Gastrocnemius medialis (tissue), 4 donors: ENCODE measurements at regions of chr19 and their contacts with region 1.

Region 1: DNA sequence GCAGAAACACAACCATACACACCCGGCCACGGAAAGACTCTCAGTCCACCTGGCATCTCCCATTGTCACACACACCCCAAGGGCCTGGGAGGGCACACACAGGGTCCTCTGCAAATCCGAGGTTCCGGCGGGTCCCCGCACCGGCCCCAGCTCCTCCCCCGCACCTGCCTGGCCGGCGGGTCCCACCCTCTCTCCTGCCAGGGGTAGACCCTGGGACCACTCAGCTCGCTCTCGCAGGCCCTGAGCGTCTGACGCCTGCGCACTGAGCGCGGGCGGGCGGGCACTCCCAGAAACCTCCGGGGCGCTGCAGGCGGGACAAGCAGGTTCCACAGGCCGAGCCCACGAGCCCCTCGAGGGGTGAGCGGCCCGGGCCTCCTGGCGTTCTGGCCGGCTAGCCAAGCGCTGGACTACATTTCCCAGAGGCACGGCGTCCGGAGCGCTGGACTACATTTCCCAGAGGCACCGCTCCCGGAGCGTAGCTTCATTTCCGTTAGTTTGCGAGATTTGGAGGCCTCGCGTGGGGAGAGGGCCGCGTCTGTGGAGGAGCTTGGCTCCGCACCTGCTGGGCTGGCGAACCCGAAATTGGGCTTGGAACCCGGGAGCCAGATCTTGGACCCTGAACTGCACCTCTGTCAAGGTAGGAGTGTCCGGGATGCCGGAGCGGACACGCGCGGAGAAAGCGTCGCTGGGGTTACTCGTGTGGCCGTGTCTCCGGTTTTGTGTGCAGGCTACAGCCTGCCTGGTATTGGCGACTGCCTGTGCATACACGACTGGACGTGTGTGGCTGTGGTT is at the start of gene ZNF420:
- DNase-seq: peak; percentile 86 to 92
- ATAC-seq: peak; percentile 98 to 99
- H3K4me3 ChIP-seq: peak within 1 kb of the TSS; percentile 82 to 98 (median 93)
- H3K27ac ChIP-seq: peak within 1 kb of the TSS; percentile 84 to 92 (median 89)
- H3K4me1 ChIP-seq: peaks cover 8 to 11% of the 10 kb centered on the region in 2 donors
- H3K27me3 ChIP-seq: no peaks in the 10 kb centered on the region
- CTCF ChIP-seq: no peak
- POLR2A ChIP-seq: peak in 1 of 2 donors; percentile 47
- total RNA-seq, gene ZNF420: 3.0 to 15.4 (median 3.7) TPM

Region 2: DNA sequence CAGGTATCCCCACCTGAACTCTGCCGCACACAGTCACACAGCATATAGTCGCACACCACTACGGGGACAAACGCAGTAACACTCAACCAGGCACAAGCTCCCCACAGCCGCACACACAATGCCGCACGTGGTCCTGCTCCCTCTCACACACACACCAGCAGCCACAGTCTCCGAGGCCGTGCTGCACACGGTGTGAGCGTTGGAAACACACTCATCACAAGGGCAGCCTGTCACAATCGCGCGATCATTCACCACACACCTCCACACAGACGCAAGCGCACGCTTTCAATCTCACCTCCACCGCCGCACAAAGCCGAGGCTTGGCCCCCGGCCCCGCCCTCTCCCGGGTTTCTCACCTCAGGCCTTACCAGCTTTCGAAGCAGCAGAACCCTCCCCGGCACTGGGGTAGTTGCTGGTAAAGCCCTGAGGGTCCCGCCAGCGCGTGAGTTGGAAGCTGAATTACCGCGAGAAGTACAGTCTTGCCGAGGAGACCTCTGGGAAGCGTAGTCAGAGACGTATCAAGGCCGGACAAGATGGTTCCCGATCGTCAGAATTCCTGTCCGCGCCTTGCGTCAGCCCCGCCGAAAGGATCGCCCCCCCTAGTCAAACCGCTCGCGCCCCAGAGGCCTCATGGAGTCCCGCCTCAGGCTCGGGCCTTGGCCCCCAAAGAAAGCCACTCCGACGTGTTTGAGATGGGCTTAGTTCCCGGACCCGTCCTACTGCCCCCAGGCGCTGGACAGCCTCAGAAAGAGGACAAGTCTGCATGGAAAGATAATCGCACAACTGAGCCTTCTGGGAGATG is 588.8 kb before region 1 on chr19 and contains the start of gene ZNF566:
- in situ Hi-C with region 1: no loop called
- intact Hi-C with region 1: loop called (anchors 2 kb)
- DNase-seq: peak; percentile 75 to 89
- ATAC-seq: peak; percentile 99 to 100
- H3K4me3 ChIP-seq: peak within 1 kb of the TSS; percentile 76 to 98 (median 76)
- H3K27ac ChIP-seq: peak within 1 kb of the TSS; percentile 90 to 98 (median 91)
- H3K4me1 ChIP-seq: peaks cover 5 to 11% of the 10 kb centered on the region in 2 donors
- H3K27me3 ChIP-seq: no peaks in the 10 kb centered on the region
- CTCF ChIP-seq: no peak
- POLR2A ChIP-seq: peak; percentile 28 to 33
- total RNA-seq, gene ZNF566: 4.1 to 8.3 (median 5.9) TPM

Region 3: DNA sequence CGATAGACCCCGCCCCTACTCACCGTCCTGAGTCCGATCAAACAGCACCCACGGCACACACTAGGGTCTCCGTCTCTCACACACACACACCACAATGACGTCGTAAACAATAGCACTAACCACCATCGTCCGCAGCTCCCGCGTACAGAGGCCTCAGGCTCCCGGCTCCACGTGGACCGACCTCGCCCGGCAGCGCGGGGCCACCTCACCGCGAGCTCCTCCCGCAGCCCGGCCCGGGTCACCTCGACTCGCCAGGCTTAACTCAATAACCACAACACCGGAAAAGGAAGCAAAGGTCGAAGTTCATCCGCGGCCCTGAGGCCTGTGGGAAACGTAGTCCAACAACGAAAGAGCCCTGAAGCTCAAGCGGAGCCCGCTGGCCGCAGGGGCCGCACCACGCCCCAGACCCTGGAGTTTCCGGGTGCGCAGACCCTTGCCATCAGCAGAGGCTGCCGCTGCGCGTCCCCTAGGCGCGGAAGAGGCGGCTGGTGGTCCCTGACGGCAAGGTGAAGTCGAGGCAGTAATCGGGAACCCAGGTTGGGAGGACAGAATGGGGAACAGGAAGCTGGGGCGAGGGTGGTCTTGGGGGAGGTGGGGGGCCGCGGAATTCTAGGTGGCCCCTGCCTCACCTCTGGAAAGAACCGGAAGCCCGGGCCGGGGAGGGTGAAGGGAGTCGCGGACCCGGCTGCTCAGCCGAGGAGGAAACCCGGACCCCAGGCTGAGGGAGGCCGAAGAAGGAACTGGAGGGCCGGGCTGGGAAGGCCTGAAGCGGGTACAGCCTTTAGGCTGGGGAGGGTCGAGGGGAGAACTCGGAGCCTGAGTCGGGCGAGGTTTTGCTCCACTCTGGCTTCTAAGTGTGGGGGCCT is 504.9 kb before region 1 on chr19 and contains the start of gene ZNF529:
- in situ Hi-C with region 1: no loop called
- intact Hi-C with region 1: loop called (anchors 1 kb)
- DNase-seq: peak; percentile 79 to 85
- ATAC-seq: peak; percentile 99
- H3K4me3 ChIP-seq: peak within 1 kb of the TSS; percentile 85 to 100 (median 94)
- H3K27ac ChIP-seq: peak within 1 kb of the TSS; percentile 81 to 91 (median 88)
- H3K4me1 ChIP-seq: peaks cover 16 to 17% of the 10 kb centered on the region in 2 donors
- H3K27me3 ChIP-seq: no peaks in the 10 kb centered on the region
- CTCF ChIP-seq: no peak
- POLR2A ChIP-seq: peak; percentile 73 to 75
- total RNA-seq, gene ZNF529: 4.1 to 6.6 (median 5.4) TPM

Region 4: GRCh38 chr19:36805364-36805763 is 272.8 kb before region 1 on chr19:
- in situ Hi-C with region 1: no loop called
- intact Hi-C with region 1: no loop called
- DNase-seq: no peak
- ATAC-seq: no peak
- H3K4me3 ChIP-seq: no peak overlapping the region
- H3K27ac ChIP-seq: no peak overlapping the region
- H3K4me1 ChIP-seq: no peaks in the 10 kb centered on the region
- H3K27me3 ChIP-seq: no peaks in the 10 kb centered on the region
- CTCF ChIP-seq: no peak
- POLR2A ChIP-seq: no peak

Region 5: DNA sequence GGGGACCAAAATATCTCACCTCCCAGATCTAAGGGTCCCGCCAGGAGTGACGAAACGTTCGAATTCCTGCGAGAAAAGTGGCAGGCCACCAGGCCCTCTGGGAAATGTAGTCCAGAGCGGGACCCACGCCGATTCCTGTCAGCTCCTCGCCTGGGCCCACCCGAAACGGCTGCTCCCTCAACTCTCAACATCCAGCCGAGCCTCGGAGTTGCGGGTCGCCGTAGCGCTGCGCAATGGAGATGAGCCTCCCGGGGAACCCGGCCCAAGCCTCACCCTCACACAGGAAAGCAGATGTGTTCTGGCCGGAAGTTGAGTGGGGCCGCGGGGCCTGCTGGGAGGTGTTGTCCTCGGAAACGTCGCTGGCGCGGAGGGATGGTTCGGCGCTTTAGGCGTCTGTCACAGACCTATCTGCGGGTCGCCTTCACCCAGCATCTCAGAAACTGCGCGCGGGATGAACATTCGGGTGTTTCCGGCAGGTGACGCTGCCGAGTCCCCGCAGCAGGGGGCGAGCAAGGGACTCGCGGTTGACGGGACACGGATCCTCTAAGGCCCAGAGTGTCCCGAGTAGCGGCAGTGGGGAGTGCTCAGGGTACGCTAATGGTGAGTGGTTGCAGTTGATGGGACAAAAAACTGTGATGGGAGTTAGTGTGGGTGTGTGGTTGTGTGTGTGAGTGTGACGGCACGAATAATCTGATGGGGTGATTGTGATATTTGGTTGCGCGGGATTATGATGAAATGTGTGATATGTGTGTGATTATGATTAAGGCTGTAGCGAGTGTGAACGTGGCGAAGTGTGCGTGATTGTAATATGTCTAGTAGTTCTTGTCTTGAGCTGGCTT is 161.9 kb before region 1 on chr19 and contains the starts of genes ZNF568 and ZNF829:
- in situ Hi-C with region 1: no loop called
- intact Hi-C with region 1: loop called (anchors 2 kb)
- DNase-seq: peak; percentile 76 to 79
- ATAC-seq: peak; percentile 98
- H3K4me3 ChIP-seq: peak within 1 kb of the TSS; percentile 82 to 98 (median 83)
- H3K27ac ChIP-seq: peak within 1 kb of the TSS; percentile 92 to 97 (median 94)
- H3K4me1 ChIP-seq: peaks cover 8 to 12% of the 10 kb centered on the region in 2 donors
- H3K27me3 ChIP-seq: no peaks in the 10 kb centered on the region
- CTCF ChIP-seq: peak; percentile 32 to 64 (median 46)
- POLR2A ChIP-seq: peak in 1 of 2 donors; percentile 12
- total RNA-seq, gene ZNF568: 3.0 to 10.2 (median 5.4) TPM
- total RNA-seq, gene ZNF829: 0.97 to 1.5 (median 1.2) TPM

Region 6: GRCh38 chr19:37114020-37114419 is 35.9 kb after region 1 on chr19:
- in situ Hi-C with region 1: no loop called
- intact Hi-C with region 1: no loop called
- DNase-seq: no peak
- ATAC-seq: no peak
- H3K4me3 ChIP-seq: peak overlapping the region in 1 of 4 donors; percentile 43
- H3K27ac ChIP-seq: no peak overlapping the region
- H3K4me1 ChIP-seq: no peaks in the 10 kb centered on the region
- H3K27me3 ChIP-seq: no peaks in the 10 kb centered on the region
- CTCF ChIP-seq: peak in 1 of 5 experiments; percentile 11
- POLR2A ChIP-seq: no peak

Region 7: GRCh38 chr19:37370880-37371661 is 292.9 kb after region 1 on chr19 and contains the start of gene ZNF527:
- in situ Hi-C with region 1: no loop called
- intact Hi-C with region 1: loop called (anchors 5 kb)
- DNase-seq: peak; percentile 95 to 97
- ATAC-seq: peak; percentile 98 to 99
- H3K4me3 ChIP-seq: peak within 1 kb of the TSS; percentile 73 to 90 (median 88)
- H3K27ac ChIP-seq: peak within 1 kb of the TSS; percentile 84 to 91 (median 88)
- H3K4me1 ChIP-seq: peaks cover 7 to 8% of the 10 kb centered on the region in 2 donors
- H3K27me3 ChIP-seq: no peaks in the 10 kb centered on the region
- CTCF ChIP-seq: no peak
- POLR2A ChIP-seq: peak; percentile 76 to 88
- total RNA-seq, gene ZNF527: 2.0 to 6.0 (median 2.8) TPM